WTC11 (cell line): ENCODE measurements at regions of chr22 and their contacts with region 1.

Region 1: DNA sequence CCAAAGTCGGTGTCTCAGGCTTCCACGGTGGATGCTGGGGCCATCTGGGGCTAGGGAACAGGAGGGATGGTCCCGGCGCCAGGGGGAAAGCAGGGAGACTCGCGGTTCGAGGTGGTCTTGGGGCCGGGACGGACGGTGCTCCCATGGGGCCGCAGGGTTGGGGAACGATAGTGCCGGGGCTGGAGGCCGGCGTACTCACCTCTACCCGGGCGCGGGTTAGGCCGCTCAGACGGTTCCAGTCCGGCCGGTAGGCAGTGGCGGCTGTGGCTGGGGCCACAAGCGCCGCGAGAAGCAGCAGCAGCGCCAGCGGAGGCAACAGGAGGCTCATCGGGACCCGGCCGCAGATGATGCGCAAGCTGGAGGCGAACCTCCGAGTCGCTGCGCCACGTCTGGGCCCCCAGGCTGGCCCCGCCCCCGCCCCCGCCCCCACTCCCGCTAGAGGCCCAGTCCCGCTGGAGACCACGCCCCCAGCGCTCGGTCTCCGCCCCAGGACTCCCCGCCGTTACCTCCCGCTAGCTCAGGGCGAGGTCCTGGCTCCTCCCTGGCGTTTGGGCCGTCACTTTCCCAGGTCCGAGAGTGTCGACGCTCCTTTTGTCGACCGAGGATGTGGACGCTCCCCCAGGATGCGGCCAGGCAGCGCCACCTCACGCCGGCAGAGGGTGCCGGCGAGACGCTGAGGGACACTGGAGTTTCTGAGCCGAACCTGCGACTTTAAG is at the start of gene SELENOM:
- DNase-seq: peak; percentile 95
- ATAC-seq: peak; percentile 85
- H3K4me3 Mint-ChIP-seq: peak within 1 kb of the TSS; percentile 74
- H3K27ac Mint-ChIP-seq: peak within 1 kb of the TSS; percentile 19; the same call in 1 of the 2 replicates
- H3K4me1 Mint-ChIP-seq: peaks cover 18% of the 10 kb centered on the region
- H3K27me3 Mint-ChIP-seq: peaks cover 49% of the 10 kb centered on the region
- CTCF ChIP-seq: peak; percentile 46
- total RNA-seq, gene SELENOM: 16.3 to 24.6 TPM (median 22.6 TPM) in 3 replicates

Region 2: DNA sequence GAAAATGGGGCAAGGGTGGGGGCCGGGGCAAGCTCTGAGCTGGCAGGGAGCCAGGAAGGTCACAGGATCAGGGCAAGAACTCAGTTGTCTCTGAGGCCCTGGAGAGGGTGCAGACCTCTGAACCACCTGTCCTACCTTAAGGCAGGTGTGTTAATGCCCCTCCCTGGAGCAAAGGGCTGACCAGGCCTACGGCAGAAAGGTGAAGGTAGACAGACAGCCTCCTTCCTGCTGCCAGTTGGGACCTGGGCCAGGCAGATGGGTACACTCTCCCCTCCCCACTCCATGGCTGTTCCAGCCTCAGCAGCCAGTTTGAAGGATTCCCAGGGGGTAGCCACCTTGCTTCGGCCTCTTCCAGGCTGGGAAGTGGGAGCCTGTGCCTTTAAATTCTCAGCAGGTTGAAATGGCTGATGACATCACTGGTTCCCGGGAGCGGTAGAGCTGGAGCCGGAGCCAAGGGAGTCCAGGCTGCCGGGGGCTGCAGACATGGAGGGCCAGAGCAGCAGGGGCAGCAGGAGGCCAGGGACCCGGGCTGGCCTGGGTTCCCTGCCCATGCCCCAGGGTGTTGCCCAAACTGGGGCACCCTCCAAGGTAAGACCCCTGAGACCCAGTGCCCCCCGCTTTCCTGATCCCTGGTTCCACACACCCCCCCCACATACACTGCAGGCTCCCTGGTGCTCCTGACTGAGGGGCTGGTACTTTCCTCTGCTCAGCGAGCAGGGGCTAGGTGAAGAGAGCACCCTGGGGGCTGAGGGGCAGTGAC is 15.4 kb after region 1 on chr22 and contains the start of gene INPP5J:
- CTCF ChIA-PET with region 1: interaction called, 56 read pairs
- POLR2A ChIA-PET with region 1: interaction called, 4 read pairs
- DNase-seq: peak; percentile 65
- ATAC-seq: peak; percentile 54
- H3K4me3 Mint-ChIP-seq: peak within 1 kb of the TSS; percentile 58
- H3K27ac Mint-ChIP-seq: no peak within 1 kb of the TSS
- H3K4me1 Mint-ChIP-seq: peaks cover 34% of the 10 kb centered on the region
- H3K27me3 Mint-ChIP-seq: peaks cover 3% of the 10 kb centered on the region; the same call in 1 of the 2 replicates
- CTCF ChIP-seq: no peak
- total RNA-seq, gene INPP5J: 6.2 to 9.0 TPM (median 7.7 TPM) in 3 replicates

Region 3: DNA sequence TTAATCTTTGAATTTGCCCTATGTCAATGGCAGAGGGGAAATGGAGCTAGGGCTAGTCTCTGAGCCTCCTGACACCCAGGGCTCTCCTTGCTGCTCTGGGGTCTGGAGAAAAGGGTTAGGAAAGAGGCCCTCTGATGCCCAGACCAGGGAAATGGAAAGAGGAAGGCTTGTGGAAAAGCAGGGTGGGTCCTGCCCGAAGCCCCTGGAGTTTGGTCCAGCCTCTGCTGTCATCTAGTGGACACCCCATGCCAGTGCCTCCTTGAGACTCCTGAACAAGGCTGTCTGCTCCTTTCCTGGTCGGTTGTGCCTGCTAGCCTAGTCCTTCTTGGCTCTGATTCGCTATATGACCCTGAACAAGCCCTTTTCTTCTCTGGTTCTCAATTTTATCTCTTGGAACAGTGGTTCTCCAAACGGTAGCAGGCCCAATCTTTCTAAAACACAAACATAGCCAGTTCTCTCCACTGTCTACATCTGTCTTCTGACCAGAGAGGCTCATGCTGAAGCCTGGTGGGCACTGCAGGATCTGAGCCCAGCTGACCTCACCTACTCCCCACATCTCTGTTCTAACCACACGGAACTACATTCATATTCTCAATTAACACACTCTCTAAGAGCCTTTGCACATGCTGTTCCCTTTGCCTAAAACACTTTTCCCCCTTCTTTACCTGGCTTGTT is 41.8 kb after region 1 on chr22:
- CTCF ChIA-PET with region 1: interaction called, 73 read pairs
- POLR2A ChIA-PET with region 1: interaction called, 4 read pairs
- DNase-seq: peak; percentile 84
- ATAC-seq: peak; percentile 99
- H3K4me3 Mint-ChIP-seq: no peak overlapping the region
- H3K27ac Mint-ChIP-seq: no peak overlapping the region
- H3K4me1 Mint-ChIP-seq: no peaks in the 10 kb centered on the region
- H3K27me3 Mint-ChIP-seq: peaks cover 31% of the 10 kb centered on the region
- CTCF ChIP-seq: peak; percentile 79

Region 4: GRCh38 chr22:31211862-31212730 is 104.8 kb after region 1 on chr22 and contains the start of gene LIMK2:
- CTCF ChIA-PET with region 1: interaction called, 13 read pairs
- POLR2A ChIA-PET with region 1: no interaction called
- DNase-seq: peak; percentile 97
- ATAC-seq: peak; percentile 96
- H3K4me3 Mint-ChIP-seq: peak within 1 kb of the TSS; percentile 88
- H3K27ac Mint-ChIP-seq: no peak within 1 kb of the TSS
- H3K4me1 Mint-ChIP-seq: peaks cover 20% of the 10 kb centered on the region
- H3K27me3 Mint-ChIP-seq: no peaks in the 10 kb centered on the region
- CTCF ChIP-seq: peak; percentile 38; the same call in 1 of the 2 replicates
- total RNA-seq, gene LIMK2: 33.1 to 42.8 TPM (median 33.6 TPM) in 3 replicates